ENCODE measurements at regions of chr4 and their contacts with region 1.

Region 1: GRCh38 chr4:102543030-102543928 is 42.1 kb downstream of the NFKB1 start:
- DNase-seq: peak; percentile 58
- H3K4me3 ChIP-seq: peak overlapping the region in 1 of 3 experiments; percentile 11
- H3K27ac ChIP-seq: peak overlapping the region; percentile 81
- H3K4me1 ChIP-seq: peaks cover 16% of the 10 kb centered on the region
- H3K27me3 ChIP-seq: no peaks in the 10 kb centered on the region
- CTCF ChIP-seq: no peak

Region 2: GRCh38 chr4:102563000-102563399 is 19.7 kb after region 1 on chr4:
- CTCF ChIA-PET with region 1: no interaction called
- dilution Hi-C with region 1: no loop called
- in situ Hi-C with region 1: no loop called
- intact Hi-C with region 1: loop called (anchors 2 kb)
- DNase-seq: peak; percentile 27
- H3K4me3 ChIP-seq: no peak overlapping the region
- H3K27ac ChIP-seq: no peak overlapping the region
- H3K4me1 ChIP-seq: no peaks in the 10 kb centered on the region
- H3K27me3 ChIP-seq: no peaks in the 10 kb centered on the region
- CTCF ChIP-seq: no peak